Adrenal gland (tissue), 19 donors: ENCODE measurements at regions of chr5 and their contacts with region 1.

Region 1: DNA sequence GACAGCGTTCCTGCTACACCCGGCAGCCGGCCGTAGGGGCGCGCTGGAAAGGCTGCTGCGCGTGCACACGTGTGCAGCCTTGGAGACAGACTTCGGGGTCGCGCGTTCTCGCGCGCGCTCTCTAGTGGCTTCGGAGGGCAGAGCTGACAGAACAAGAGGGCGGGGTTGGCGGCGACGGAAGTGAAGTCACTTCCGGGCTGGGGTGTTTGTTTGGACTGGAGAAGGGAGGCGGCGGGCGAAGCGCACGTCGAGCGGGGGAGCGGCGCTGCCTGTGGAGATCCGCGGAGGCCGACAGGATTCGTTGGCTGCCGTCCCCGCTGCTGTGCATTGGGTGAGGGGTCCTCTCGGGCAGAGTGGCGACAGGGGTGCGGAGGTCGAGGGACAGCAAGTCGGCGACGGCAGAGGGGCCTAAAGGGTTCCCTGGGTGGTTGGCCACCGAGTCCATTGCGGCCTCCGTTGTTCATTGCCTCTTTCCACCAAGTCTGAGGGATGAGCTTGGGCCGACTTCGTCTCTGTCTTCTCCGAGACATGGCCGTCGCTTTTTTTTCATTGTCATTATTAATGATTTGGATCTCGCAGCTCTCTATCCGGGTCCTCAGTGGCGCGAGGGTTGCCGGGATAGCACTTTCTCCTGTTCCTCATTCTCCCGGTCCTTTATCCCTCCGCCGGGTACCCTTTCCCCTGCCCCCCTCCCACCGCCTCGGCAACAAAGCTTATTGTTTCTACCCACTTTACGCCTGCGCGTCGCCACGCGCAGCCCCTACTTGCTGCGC is at the start of gene PAIP2:
- DNase-seq: peak; percentile 97 to 99 (median 98)
- H3K4me3 ChIP-seq: peak within 1 kb of the TSS; percentile 30 to 88 (median 61)
- H3K27ac ChIP-seq: peak within 1 kb of the TSS; percentile 90 to 98 (median 94)
- H3K4me1 ChIP-seq: peaks cover 8 to 39% of the 10 kb centered on the region in 2 donors
- H3K27me3 ChIP-seq: no peaks in the 10 kb centered on the region
- CTCF ChIP-seq: peak; percentile 57 to 79 (median 72)
- POLR2A ChIP-seq: peak; percentile 92 to 97
- total RNA-seq, gene PAIP2: 127 to 198 (median 148) TPM

Region 2: DNA sequence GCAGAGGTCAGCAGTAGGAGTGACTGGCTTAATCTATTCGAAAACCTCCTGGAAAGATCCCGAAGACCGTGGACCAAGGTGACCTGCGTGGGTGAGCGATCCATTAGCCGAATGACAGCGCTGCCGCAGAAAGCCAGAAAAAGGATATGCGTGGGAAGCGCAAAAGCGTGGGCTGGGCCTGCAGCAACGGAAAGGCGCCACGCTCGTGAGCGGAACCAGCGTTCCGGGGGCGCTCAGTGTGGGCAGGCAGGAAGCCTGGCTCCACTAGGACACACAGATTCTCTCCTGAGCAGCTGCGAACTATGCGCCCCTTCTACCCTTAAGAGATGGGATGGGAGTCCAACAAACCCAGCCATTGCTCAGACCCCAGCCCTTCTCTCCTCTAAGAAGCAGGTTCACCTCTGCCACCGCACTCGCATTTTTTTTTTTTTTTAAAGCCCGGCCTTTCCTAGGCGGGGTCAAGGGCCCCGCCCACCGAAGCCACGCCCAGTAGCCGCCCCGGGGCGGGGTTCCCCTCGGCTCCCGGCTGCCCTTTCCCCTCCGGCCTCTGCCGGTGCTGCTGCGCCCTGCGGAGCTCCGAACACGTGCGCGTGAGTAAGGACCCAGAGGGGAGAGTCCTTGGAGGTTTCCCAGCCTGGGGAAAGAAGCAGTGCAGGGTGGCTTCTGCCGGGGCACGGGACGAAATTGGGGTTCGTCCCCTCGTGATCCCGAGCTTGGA is 68.1 kb before region 1 on chr5:
- intact Hi-C with region 1: loop called in 1 of 2 experiments (anchors 2 kb)
- DNase-seq: peak; percentile 93 to 94 (median 94)
- H3K4me3 ChIP-seq: peak overlapping the region in 3 of 4 donors; percentile 28 to 59 (median 57)
- H3K27ac ChIP-seq: peak overlapping the region; percentile 41 to 90 (median 76)
- H3K4me1 ChIP-seq: peaks cover 18 to 29% of the 10 kb centered on the region in 2 donors
- H3K27me3 ChIP-seq: no peaks in the 10 kb centered on the region
- CTCF ChIP-seq: peak; percentile 11 to 45 (median 34)
- POLR2A ChIP-seq: peak in 1 of 2 donors; percentile 79

Region 3: DNA sequence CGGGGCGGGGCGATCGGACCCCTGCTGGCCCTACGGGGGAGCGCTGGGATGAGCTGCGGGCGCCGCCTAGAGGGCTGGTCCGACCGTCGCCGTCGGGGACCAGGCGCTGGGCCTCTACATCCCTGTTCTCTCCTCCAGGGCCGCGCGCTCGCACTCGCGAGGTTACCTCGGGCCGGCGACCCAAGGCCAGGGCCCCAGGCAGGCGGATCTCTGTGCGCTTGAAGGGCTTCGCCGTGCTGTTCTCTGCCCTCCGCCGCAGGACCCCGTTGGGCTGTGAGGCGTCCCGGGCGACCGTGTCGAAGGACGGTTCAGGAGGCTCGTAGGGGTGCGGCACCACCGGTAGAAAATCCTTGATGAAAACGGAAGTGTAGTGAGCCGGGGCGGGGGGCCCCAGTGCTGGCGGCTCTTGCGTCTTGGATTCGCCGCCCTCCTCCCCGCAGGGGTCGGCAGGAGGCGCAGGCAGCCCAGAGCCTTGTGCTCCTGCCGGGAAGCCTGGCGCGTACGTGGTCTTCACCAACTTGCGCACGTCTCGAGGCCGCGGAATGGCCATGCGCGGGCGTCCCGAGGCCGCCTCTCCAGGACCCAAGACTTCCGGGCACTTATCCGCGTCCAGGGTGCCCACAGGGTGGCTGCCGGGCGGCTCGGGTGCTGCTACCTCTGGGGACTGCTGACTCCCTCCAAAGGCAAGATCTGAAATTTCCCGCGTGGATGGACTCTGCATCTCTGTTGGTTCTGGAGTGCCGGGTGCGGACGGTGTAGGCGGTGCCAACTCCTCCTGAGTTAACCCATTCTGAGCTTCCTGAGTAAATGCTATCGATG is 51.1 kb after region 1 on chr5:
- intact Hi-C with region 1: loop called in 1 of 2 experiments (anchors 5 kb)
- DNase-seq: peak; percentile 61 to 88 (median 76)
- H3K4me3 ChIP-seq: peak overlapping the region in 3 of 4 donors; percentile 22 to 69 (median 42)
- H3K27ac ChIP-seq: peak overlapping the region in 3 of 5 donors; percentile 11 to 26 (median 21)
- H3K4me1 ChIP-seq: peaks cover 30 to 40% of the 10 kb centered on the region in 2 donors
- H3K27me3 ChIP-seq: no peaks in the 10 kb centered on the region
- CTCF ChIP-seq: peak in 5 of 6 experiments; percentile 38 to 59 (median 44)
- POLR2A ChIP-seq: no peak